ENCODE measurements at regions of chr3 and their contacts with region 1.

Region 1: GRCh38 chr3:185942907-185943759 is 5.3 kb upstream of the TRA2B start:
- DNase-seq: peak; percentile 91
- ATAC-seq: peak; percentile 95
- H3K4me3 Mint-ChIP-seq: peak overlapping the region; percentile 26
- H3K27ac Mint-ChIP-seq: peak overlapping the region; percentile 47
- H3K4me1 Mint-ChIP-seq: peaks cover 21% of the 10 kb centered on the region
- H3K27me3 Mint-ChIP-seq: peaks cover 14% of the 10 kb centered on the region

Region 2: GRCh38 chr3:185924375-185924774 is 18.8 kb before region 1 on chr3:
- CTCF ChIA-PET with region 1: interaction called, 98 read pairs
- POLR2A ChIA-PET with region 1: interaction called, 107 read pairs
- DNase-seq: no peak
- ATAC-seq: no peak
- H3K4me3 Mint-ChIP-seq: no peak overlapping the region
- H3K27ac Mint-ChIP-seq: peak overlapping the region; percentile 46
- H3K4me1 Mint-ChIP-seq: peaks cover 65% of the 10 kb centered on the region
- H3K27me3 Mint-ChIP-seq: no peaks in the 10 kb centered on the region

Region 3: GRCh38 chr3:185968168-185968567 is 25.0 kb after region 1 on chr3:
- CTCF ChIA-PET with region 1: interaction called, 34 read pairs
- POLR2A ChIA-PET with region 1: no interaction called
- DNase-seq: no peak
- ATAC-seq: no peak
- H3K4me3 Mint-ChIP-seq: no peak overlapping the region
- H3K27ac Mint-ChIP-seq: no peak overlapping the region
- H3K4me1 Mint-ChIP-seq: no peaks in the 10 kb centered on the region
- H3K27me3 Mint-ChIP-seq: peaks cover 4% of the 10 kb centered on the region

Region 4: GRCh38 chr3:186235554-186235953 is 292.4 kb after region 1 on chr3:
- CTCF ChIA-PET with region 1: interaction called, 13 read pairs
- POLR2A ChIA-PET with region 1: no interaction called
- DNase-seq: no peak
- ATAC-seq: peak; percentile 80
- H3K4me3 Mint-ChIP-seq: peak overlapping the region; percentile 45
- H3K27ac Mint-ChIP-seq: peak overlapping the region; percentile 86
- H3K4me1 Mint-ChIP-seq: peaks cover 20% of the 10 kb centered on the region
- H3K27me3 Mint-ChIP-seq: peaks cover 13% of the 10 kb centered on the region

Region 5: DNA sequence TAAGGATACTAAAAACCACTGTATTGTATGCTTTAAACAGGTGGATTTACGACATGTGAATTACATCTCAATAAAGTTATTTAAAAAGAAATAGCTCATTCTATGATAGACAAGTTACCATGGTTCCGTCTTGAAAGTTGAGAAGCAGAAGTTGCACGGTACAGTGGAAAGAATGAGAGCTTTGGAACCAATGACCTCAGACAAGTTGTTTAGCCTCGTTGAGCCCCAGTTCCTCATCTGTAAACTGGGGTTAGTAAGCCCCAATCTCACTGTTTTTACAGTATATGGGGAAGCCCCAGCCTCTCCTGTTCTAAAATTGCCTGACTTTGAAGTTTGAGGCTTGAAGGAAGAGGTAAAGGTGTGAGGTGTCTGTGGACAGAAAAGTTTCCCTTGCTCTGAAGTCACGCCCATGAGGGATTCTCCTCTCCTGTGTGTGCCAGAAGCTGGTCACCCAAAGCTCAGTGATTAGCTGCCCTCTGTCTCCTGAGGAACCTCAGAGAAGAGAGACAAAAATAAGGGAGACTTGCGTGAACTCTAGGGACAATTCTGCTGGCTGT is 591.1 kb after region 1 on chr3:
- CTCF ChIA-PET with region 1: interaction called, 64 read pairs
- POLR2A ChIA-PET with region 1: interaction called, 6 read pairs
- DNase-seq: peak; percentile 57
- ATAC-seq: peak; percentile 95
- H3K4me3 Mint-ChIP-seq: no peak overlapping the region
- H3K27ac Mint-ChIP-seq: no peak overlapping the region
- H3K4me1 Mint-ChIP-seq: peaks cover 35% of the 10 kb centered on the region
- H3K27me3 Mint-ChIP-seq: no peaks in the 10 kb centered on the region

Region 6: DNA sequence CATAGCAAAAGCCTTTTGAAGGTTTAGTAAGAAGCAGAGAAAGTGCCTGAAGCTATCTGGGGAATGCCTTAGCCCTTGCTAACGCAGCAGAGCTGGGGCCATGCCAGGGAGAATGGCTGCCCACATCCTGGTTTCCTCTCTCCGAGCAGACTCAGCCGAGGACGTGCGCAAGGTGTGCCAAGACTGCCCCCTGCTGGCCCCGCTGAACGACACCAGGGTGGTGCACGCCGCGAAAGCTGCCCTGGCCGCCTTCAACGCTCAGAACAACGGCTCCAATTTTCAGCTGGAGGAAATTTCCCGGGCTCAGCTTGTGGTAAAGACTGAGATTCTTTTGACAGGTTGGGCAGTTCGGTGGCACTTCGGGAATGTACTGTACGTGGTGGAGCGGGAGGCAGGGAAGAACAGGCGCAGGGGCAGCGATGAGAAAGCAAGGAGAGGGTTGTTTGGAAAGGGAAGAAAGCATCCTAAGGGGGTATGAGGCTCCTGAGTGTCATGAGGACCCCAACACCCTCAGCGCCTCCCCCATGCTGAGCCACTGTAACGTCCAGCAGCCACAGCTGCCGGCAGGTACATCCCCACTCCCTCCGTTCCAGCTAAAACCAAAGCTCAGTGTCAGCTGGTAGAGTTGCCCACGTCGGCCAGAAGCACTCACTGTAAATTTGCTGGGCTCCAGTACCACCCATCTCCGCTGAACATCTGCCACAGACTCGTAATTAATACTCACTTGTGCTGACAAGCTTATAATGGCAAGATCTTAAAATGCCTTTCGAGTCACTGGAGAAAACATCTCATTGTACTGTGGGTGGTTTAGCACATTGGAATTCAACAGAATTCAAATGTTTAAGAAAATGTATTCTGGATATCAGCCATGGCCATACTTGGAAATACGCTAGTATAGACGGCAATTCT is 674.2 kb after region 1 on chr3:
- CTCF ChIA-PET with region 1: interaction called, 10 read pairs
- POLR2A ChIA-PET with region 1: no interaction called
- DNase-seq: peak; percentile 88
- ATAC-seq: peak; percentile 99
- H3K4me3 Mint-ChIP-seq: peak overlapping the region; percentile 64
- H3K27ac Mint-ChIP-seq: peak overlapping the region; percentile 59
- H3K4me1 Mint-ChIP-seq: peaks cover 24% of the 10 kb centered on the region
- H3K27me3 Mint-ChIP-seq: peaks cover 49% of the 10 kb centered on the region